Common myeloid progenitor, CD34-positive (primary cell): ENCODE measurements at regions of chr10 and their contacts with region 1.

Region 1: GRCh38 chr10:132551093-132551807 is 13.7 kb downstream of the INPP5A start:
- DNase-seq: peak; percentile 80 to 97 (median 94)
- H3K4me3 ChIP-seq: peak overlapping the region in 3 of 7 experiments; percentile 29 to 50 (median 47)
- H3K27ac ChIP-seq: peak overlapping the region; percentile 79 to 94
- H3K4me1 ChIP-seq: peaks cover 8 to 87% (median 83%) of the 10 kb centered on the region in 4 experiments
- H3K27me3 ChIP-seq: no peaks in the 10 kb centered on the region

Region 2: DNA sequence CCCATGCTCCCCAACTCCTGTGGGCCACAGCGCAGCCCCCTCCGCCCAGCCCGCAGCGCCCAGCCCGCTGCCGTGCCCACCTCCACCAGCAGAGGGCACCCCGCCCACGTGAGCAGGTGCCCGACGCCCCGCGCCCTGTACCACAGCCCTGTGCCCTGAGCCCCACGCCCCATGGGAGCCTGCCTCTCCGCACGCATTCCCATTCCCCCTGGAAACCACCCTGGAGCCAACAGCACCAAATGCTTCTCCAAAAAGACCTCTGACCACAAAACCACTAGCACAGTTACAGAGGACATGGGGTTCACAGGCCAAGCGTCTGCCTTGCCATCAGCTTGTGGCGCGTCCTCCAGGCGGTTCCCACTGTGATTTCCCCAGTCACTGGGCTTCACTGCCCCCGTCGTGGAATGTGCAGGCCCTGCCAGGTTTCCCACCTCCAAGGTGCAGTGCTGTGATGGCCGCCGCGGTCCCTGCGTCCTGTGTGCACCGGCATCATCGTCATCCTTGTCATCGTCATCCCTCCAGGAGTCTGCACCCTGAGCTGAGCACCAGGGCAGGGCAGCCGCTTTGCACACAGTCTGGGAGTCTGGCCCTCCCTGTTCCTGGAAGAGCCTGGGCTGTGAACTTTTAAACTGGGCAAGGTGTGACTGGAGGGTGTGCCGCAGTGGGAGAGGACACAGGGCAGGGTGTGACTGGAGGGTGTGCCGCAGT is 92.5 kb before region 1 on chr10:
- CTCF ChIA-PET with region 1: interaction called, 17 read pairs
- POLR2A ChIA-PET with region 1: interaction called, 3 read pairs
- DNase-seq: peak in 2 of 3 donors; percentile 68
- H3K4me3 ChIP-seq: no peak overlapping the region
- H3K27ac ChIP-seq: no peak overlapping the region
- H3K4me1 ChIP-seq: peaks cover 0 to 6% (median 3%) of the 10 kb centered on the region in 4 experiments
- H3K27me3 ChIP-seq: no peaks in the 10 kb centered on the region

Region 3: DNA sequence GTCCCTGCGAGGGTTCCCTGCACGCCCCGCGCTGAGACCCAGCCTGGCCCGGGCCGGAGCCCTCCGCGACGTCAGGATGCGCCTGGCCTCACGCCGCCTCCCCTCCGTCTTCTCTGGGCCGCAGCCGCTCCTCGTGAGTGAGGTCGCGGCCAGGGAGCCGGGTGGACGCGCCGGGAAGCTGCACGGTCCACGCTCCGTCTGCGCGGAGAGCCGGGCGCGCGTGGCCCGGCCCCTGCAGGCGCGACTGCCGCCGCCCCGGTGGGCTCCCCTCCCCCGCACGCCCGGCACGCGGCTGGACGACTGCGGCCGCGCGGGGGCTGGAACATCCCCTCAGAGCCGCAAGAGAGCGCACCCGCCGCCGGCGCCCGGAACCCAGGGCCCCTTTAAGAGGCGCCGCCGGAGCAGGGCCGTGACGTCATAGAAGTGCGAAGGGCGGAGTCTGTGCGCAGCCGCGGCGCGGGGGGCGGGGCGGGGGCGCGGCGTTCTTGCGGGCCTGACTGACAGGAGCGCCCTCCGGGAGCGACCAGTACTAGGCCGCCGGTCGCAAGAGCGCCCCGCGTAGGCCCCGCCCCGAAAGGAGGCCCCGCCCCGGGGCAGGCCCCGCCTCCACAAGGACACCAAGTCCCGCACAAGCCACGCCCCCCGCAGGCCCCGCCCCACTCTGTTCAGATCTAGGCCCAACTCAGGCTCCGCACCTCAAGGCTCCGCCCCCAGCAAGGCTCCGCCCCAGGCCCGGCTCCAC is 14.1 kb before region 1 on chr10:
- CTCF ChIA-PET with region 1: interaction called, 38 read pairs
- POLR2A ChIA-PET with region 1: interaction called, 15 read pairs
- DNase-seq: peak; percentile 98 to 99 (median 99)
- H3K4me3 ChIP-seq: peak overlapping the region; percentile 48 to 82 (median 64)
- H3K27ac ChIP-seq: no peak overlapping the region
- H3K4me1 ChIP-seq: peaks cover 13 to 55% (median 52%) of the 10 kb centered on the region in 4 experiments
- H3K27me3 ChIP-seq: no peaks in the 10 kb centered on the region

Region 4: DNA sequence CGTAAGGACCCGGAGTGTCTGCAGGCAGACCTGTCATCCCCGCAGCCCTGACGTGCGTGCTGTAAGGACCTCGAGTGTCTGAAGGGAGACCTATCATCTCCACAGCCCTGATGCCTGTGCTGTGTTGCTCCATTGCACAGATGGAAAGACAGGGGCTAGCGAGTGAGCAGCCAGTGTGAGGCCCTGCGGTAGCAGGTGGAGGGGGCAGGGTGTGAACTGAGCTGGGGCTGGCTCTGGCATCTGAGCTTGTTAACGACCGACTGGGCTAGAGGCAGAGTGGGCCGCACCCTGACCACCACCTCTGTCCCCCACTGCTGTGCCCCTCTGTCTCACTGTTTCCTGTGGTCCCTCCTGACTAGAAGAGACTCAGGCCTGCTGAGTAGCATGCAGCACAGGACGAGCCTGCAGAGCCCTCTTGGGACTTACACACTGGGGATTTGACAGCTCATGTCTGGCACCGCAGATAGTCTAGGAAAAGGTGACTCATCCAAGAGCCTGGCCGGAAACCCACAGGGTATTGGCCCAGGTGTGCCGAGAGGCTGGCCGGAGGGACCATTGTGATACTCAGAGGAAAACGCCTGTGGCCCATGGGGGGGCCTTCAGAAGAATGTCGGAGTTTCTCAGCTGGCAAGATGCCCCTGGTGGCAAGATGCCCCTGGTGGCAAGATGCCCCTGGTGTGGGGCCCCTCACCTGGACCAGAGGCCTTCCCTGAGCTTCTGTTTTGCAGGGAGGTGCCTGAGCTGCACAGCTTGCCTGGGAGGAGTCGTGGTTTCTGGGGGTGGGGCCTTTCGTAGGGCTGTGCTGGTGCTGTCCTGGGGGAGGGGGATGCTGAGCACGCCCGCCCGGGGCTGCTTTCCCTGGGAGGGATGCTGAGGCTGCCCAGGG is 20.6 kb after region 1 on chr10:
- CTCF ChIA-PET with region 1: interaction called, 13 read pairs
- POLR2A ChIA-PET with region 1: interaction called, 5 read pairs
- DNase-seq: peak; percentile 87 to 98 (median 97)
- H3K4me3 ChIP-seq: no peak overlapping the region
- H3K27ac ChIP-seq: no peak overlapping the region
- H3K4me1 ChIP-seq: peaks cover 4 to 63% (median 55%) of the 10 kb centered on the region in 4 experiments
- H3K27me3 ChIP-seq: no peaks in the 10 kb centered on the region

Region 5: GRCh38 chr10:132593900-132594876 is 42.9 kb after region 1 on chr10:
- CTCF ChIA-PET with region 1: no interaction called
- POLR2A ChIA-PET with region 1: no interaction called
- DNase-seq: peak in 1 of 3 donors; percentile 37
- H3K4me3 ChIP-seq: peak overlapping the region in 1 of 7 experiments; percentile 19
- H3K27ac ChIP-seq: no peak overlapping the region
- H3K4me1 ChIP-seq: peaks cover 8 to 68% (median 52%) of the 10 kb centered on the region in 4 experiments
- H3K27me3 ChIP-seq: no peaks in the 10 kb centered on the region